Gastrocnemius medialis (tissue), 4 donors: ENCODE measurements at regions of chr19 and their contacts with region 1.

Region 1: DNA sequence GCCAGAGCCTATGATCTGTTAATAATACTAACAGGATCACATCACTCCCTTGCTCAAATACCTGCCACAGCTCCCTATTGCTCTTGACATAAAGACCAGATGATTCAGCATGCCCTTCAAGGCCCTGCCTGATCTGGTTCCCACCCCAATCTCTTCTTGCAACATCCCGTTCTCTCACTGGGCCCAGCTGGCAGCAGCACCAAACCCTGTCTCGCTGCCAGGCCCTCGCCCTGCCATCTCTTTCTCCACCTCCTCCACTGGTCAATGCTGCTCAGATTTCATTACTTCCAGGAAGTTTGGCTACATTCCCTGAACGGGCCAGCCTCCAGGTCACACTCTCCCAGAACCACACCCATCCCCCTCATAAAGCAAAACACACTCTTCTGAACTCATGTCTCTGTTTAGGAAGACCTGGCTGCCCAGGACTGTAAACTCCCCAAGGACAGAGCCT is 8.6 kb upstream of the BCAT2 start:
- DNase-seq: peak; percentile 93 to 99
- ATAC-seq: peak; percentile 88
- H3K4me3 ChIP-seq: no peak overlapping the region
- H3K27ac ChIP-seq: peak overlapping the region; percentile 93 to 95 (median 93)
- H3K4me1 ChIP-seq: peaks cover 32 to 38% of the 10 kb centered on the region in 2 donors
- H3K27me3 ChIP-seq: no peaks in the 10 kb centered on the region
- CTCF ChIP-seq: no peak
- POLR2A ChIP-seq: peak in 1 of 2 donors; percentile 16

Region 2: DNA sequence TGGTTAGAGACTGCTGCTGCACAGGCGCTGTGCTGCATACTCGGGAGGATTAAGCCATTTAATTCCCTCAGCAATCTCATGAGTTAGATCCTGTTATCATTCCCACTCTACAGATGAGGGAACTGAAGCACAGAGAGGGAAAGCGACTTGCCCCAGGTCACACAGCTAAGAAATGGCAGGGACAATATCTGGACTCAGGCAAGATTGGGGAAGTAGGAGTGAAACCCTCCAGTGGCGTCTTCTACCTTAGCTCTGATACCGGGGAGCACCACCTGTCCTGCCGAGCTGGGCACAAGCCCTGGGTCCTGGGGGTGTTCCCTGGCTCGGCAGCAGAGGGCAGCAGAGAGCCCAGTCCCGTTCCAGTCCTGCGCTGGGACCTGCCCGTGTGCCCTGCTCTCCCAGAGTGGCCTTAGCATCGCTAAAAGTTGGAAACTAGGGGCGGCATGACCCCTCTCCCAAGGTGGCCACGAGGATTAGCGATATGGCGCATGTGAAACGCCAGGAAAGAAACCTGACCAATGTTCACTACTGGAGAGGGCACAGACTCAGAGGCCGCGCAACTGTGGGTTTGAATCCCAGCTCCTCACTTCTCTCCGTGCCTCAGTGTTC is 329.7 kb before region 1 on chr19:
- in situ Hi-C with region 1: no loop called
- intact Hi-C with region 1: no loop called
- DNase-seq: peak; percentile 43 to 64
- ATAC-seq: peak; percentile 35 to 38
- H3K4me3 ChIP-seq: no peak overlapping the region
- H3K27ac ChIP-seq: no peak overlapping the region
- H3K4me1 ChIP-seq: peaks cover 9% of the 10 kb centered on the region in 2 donors
- H3K27me3 ChIP-seq: peaks cover 20 to 38% (median 29%) of the 10 kb centered on the region in 3 donors
- CTCF ChIP-seq: peak; percentile 90 to 98 (median 94)
- POLR2A ChIP-seq: no peak

Region 3: GRCh38 chr19:48772503-48772953 is 46.9 kb before region 1 on chr19:
- in situ Hi-C with region 1: no loop called
- intact Hi-C with region 1: loop called (anchors 2 kb)
- DNase-seq: peak; percentile 95 to 97
- ATAC-seq: peak; percentile 88 to 90
- H3K4me3 ChIP-seq: no peak overlapping the region
- H3K27ac ChIP-seq: peak overlapping the region; percentile 88 to 96 (median 92)
- H3K4me1 ChIP-seq: peaks cover 26 to 27% of the 10 kb centered on the region in 2 donors
- H3K27me3 ChIP-seq: no peaks in the 10 kb centered on the region
- CTCF ChIP-seq: no peak
- POLR2A ChIP-seq: no peak

Region 4: DNA sequence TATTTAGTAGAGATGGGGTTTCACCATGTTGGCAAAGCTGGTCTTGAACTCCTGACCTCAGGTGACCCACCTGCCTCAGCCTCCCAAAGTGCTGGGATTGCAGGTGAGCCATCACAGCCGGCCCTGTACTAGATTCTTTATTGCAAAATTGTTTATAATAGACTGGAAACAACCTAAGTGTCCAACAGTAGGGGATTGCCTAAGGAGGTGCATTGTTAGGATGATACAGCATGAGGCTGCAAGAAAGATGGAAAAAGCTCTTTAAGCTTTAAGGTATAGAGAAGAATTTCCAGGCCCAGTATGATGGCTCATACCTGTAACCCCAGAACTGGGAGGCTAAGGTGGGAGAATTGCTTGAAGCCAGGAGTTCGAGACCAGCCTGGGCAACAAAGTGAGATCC is 16.8 kb before region 1 on chr19:
- in situ Hi-C with region 1: no loop called
- intact Hi-C with region 1: loop called (anchors 2 kb)
- DNase-seq: no peak
- ATAC-seq: no peak
- H3K4me3 ChIP-seq: no peak overlapping the region
- H3K27ac ChIP-seq: no peak overlapping the region
- H3K4me1 ChIP-seq: no peaks in the 10 kb centered on the region
- H3K27me3 ChIP-seq: no peaks in the 10 kb centered on the region
- CTCF ChIP-seq: no peak
- POLR2A ChIP-seq: no peak